K562 (cell line): ENCODE measurements at regions of chr2 and their contacts with region 1.

Region 1: DNA sequence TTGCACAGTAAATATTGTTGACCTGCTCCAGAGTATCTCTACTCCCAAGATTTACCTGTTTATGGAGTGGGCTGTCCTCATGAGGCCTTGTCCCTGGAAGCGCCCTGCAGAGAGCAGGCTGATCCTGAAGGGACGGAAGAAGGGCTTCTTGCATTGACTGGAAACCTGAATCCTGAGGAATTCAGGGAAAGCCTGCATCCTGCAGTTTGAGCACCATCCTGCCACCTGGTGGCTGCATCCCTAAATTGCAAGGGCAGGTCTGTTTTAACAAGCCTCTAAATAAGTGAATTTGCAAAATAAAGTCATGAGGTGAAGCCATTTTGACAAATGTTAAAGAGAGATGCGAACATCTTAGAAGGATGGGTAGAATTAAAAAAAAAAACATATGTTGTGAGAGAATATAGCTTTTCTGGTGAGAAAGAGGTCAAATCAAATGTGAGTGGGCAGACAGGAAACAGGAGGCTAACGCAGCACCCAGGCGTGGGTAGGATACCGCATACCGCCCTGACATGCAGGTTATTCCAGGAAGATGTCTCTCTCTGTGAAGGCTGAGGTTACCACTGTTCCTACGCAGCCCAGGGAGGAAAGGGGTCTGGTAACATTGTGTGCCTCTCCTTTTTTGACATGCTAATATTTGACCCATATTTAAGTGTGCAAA is 754.9 kb downstream of the RNF144A start:
- DNase-seq: peak; percentile 57 to 67 (median 60)
- ATAC-seq: peak; percentile 81
- H3K4me3 ChIP-seq: no peak overlapping the region
- H3K27ac ChIP-seq: no peak overlapping the region
- H3K4me1 ChIP-seq: no peaks in the 10 kb centered on the region
- H3K27me3 ChIP-seq: no peaks in the 10 kb centered on the region
- CTCF ChIP-seq: peak; percentile 62 to 85 (median 75)
- EP300 ChIP-seq: no peak
- POLR2A ChIP-seq: no peak
- RAD21 ChIP-seq: peak; percentile 53 to 65

Region 2: GRCh38 chr2:7097348-7097895 is 574.7 kb before region 1 on chr2:
- CTCF ChIA-PET with region 1: interaction called, 10 read pairs
- POLR2A ChIA-PET with region 1: no interaction called
- in situ Hi-C with region 1: no loop called
- intact Hi-C with region 1: loop called (anchors 5 kb)
- DNase-seq: peak; percentile 72 to 82 (median 80)
- ATAC-seq: peak; percentile 98
- H3K4me3 ChIP-seq: no peak overlapping the region
- H3K27ac ChIP-seq: no peak overlapping the region
- H3K4me1 ChIP-seq: peaks cover 0 to 3% of the 10 kb centered on the region in 2 experiments; a peak in 2 of 5 replicates
- H3K27me3 ChIP-seq: peaks cover 6 to 36% of the 10 kb centered on the region in 2 experiments
- CTCF ChIP-seq: peak; percentile 83 to 95 (median 91)
- EP300 ChIP-seq: no peak
- POLR2A ChIP-seq: no peak
- RAD21 ChIP-seq: peak; percentile 75 to 83

Region 3: GRCh38 chr2:7118606-7119503 is 553.3 kb before region 1 on chr2:
- CTCF ChIA-PET with region 1: no interaction called
- POLR2A ChIA-PET with region 1: no interaction called
- in situ Hi-C with region 1: no loop called
- intact Hi-C with region 1: loop called (anchors 1 kb)
- DNase-seq: peak in 2 of 4 experiments; percentile 24 to 27
- ATAC-seq: peak; percentile 82
- H3K4me3 ChIP-seq: no peak overlapping the region
- H3K27ac ChIP-seq: no peak overlapping the region
- H3K4me1 ChIP-seq: no peaks in the 10 kb centered on the region
- H3K27me3 ChIP-seq: peaks cover 4 to 9% of the 10 kb centered on the region in 2 experiments; a peak in 2 of 5 replicates
- CTCF ChIP-seq: peak; percentile 44 to 61 (median 51); a peak in 5 of 6 replicates
- EP300 ChIP-seq: no peak
- POLR2A ChIP-seq: no peak
- RAD21 ChIP-seq: peak; percentile 56 to 60

Region 4: DNA sequence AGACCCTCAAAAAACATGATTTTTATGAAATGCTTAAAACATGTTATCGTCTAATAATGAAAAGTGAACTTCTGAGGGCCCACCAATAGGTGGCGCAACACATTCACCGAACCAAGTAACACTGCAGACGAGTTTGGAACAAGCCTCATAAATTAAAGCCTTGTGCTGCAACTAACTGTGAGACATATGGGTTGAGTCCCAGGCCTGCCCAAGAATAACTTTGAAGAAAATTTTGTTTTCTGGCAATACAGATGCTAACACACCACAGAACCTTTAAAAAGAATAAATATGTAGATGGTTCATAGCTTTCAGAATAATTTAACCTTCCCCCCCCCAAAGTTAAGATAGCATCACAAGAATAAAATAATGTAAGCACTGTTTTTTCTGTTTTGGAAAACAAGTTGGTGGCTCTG is 469.1 kb before region 1 on chr2:
- CTCF ChIA-PET with region 1: interaction called, 3 read pairs
- POLR2A ChIA-PET with region 1: no interaction called
- in situ Hi-C with region 1: no loop called
- intact Hi-C with region 1: loop called (anchors 2 kb)
- DNase-seq: peak; percentile 35 to 65 (median 50)
- ATAC-seq: peak; percentile 77
- H3K4me3 ChIP-seq: no peak overlapping the region
- H3K27ac ChIP-seq: no peak overlapping the region
- H3K4me1 ChIP-seq: no peaks in the 10 kb centered on the region
- H3K27me3 ChIP-seq: peaks cover 0 to 22% of the 10 kb centered on the region in 2 experiments; a peak in 2 of 5 replicates
- CTCF ChIP-seq: peak; percentile 52 to 90 (median 81)
- EP300 ChIP-seq: no peak
- POLR2A ChIP-seq: no peak
- RAD21 ChIP-seq: peak; percentile 43 to 74

Region 5: GRCh38 chr2:7427293-7428060 is 244.7 kb before region 1 on chr2:
- CTCF ChIA-PET with region 1: interaction called, 4 read pairs
- POLR2A ChIA-PET with region 1: no interaction called
- in situ Hi-C with region 1: no loop called
- intact Hi-C with region 1: loop called (anchors 1 kb)
- DNase-seq: peak; percentile 51 to 55 (median 54)
- ATAC-seq: peak; percentile 85
- H3K4me3 ChIP-seq: no peak overlapping the region
- H3K27ac ChIP-seq: no peak overlapping the region
- H3K4me1 ChIP-seq: peaks cover 0 to 7% of the 10 kb centered on the region in 2 experiments; a peak in 1 of 5 replicates
- H3K27me3 ChIP-seq: peaks cover 0 to 17% of the 10 kb centered on the region in 2 experiments; a peak in 1 of 5 replicates
- CTCF ChIP-seq: peak; percentile 52 to 68 (median 60); a peak in 5 of 6 replicates
- EP300 ChIP-seq: no peak
- POLR2A ChIP-seq: no peak
- RAD21 ChIP-seq: peak; percentile 71 to 73